ENCODE measurements at regions of chr6 and their contacts with region 1.

Region 1: GRCh38 chr6:39302669-39303424 is 11.4 kb downstream of the KCNK17 start:
- DNase-seq: peak; percentile 83 to 92 (median 86)
- H3K4me3 ChIP-seq: peak overlapping the region in 2 of 3 donors; percentile 13 to 20
- H3K27ac ChIP-seq: no peak overlapping the region
- H3K4me1 ChIP-seq: peaks cover 0 to 6% (median 0%) of the 10 kb centered on the region in 3 donors
- H3K27me3 ChIP-seq: no peaks in the 10 kb centered on the region
- CTCF ChIP-seq: peak; percentile 97

Region 2: DNA sequence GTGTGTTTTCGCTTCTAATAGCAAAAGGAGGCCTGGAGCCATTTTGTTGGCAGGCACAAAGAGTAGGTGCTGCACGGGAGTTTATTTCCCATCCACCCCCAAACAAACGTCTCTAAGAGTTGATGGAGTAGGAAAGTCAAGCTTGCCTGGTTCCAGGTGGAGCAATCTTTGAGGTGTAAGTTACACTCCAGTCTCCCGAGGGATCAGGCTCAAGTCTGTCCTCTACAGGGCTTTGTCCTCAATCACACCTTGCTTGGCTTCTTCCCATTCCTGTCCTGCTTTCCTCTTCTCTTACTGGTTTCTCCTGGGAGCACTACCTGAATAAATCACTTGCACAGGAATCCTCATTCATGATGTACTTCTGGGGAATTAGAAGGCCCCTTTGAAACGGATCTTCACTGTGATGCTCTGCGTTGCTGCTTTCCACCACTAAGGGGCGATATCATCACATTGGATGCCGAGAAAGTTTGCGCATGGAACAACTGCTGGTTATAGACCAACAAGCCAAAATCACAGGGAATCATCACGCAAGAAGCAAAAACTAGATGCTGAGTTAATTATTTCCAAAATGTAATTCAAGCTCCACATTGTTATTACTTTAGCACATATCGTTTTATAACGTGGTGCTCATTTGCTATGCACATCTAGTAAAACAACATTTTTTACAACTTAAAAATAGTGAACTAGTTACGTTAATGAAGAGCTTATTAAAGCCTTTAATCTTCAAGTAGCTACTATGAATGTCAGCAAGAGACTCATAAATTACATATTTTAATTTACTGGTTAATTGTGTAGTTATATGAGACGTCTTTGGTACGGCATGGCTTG is 430.9 kb before region 1 on chr6:
- intact Hi-C with region 1: loop called (anchors 10 kb)
- DNase-seq: peak in 4 of 5 donors; percentile 60 to 83 (median 74)
- H3K4me3 ChIP-seq: no peak overlapping the region
- H3K27ac ChIP-seq: no peak overlapping the region
- H3K4me1 ChIP-seq: no peaks in the 10 kb centered on the region
- H3K27me3 ChIP-seq: no peaks in the 10 kb centered on the region
- CTCF ChIP-seq: peak; percentile 85

Region 3: DNA sequence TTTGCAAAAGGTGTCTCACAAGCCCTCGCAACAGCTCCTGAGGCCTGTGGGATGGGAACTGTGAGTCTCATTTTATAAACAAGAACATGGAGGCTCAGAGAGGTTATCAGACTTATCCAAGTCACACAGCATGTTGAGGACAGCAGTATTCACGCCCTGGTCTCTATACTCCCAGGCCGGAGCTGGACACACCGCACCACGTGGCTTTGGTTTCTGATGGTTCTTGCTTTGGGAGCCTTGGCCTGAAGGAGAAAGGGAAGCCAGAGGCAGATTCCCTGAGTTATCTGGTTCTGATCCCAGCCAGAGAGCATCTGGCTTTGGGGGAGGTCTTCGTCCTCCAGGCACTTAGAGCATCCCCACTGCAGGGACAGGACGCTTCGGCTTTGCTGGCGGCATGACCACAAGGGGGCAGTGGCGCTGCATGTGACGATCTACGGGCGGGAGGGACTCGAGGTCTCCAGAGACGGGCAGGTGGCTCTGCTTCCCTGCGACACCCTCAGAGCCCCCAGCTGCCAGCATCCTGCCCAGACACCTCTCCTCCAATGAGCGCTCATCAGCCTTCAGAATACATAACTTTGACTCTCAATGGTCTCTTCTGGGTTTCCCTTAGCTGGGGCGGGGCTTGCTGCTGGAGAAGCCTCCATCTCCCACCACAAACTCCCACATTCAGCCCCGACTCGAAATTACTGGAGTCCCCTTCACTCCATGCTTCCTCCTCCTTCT is 136.5 kb before region 1 on chr6:
- intact Hi-C with region 1: loop called (anchors 5 kb)
- DNase-seq: peak; percentile 83 to 91 (median 88)
- H3K4me3 ChIP-seq: no peak overlapping the region
- H3K27ac ChIP-seq: no peak overlapping the region
- H3K4me1 ChIP-seq: peaks cover 0 to 21% (median 5%) of the 10 kb centered on the region in 3 donors
- H3K27me3 ChIP-seq: no peaks in the 10 kb centered on the region
- CTCF ChIP-seq: peak; percentile 91

Region 4: DNA sequence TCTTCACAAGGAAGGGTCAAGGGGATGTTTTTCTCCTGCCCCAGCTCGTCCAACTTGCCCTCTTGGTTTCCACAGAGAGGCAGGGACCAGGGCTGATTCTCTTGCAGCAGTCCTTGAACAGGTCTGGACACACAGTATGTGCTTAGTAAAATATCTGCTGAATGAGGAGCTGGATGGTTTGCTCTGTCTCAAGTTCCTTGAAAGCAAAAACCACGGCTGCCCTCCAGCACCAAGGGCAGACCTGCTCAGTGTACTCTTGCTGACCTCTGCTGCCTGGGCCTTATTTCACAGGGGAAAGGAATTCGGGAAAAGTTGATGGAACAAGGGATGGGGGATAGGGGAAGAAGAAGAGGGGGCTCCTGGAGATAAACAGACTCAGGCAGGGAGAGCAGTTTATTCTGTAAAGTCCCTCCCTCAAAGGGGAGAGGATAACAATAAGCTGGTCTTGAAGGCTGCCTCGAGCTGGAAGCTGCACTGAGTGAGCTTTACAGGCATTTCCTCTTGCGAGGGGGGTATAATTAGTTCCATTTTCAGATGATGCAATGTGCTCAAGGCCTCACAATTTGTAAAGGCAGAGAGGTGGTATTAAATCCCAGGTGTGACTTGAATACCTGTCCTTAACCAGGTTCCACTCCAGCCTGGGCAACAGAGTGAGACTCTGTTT is 83.8 kb before region 1 on chr6:
- intact Hi-C with region 1: no loop called
- DNase-seq: no peak
- H3K4me3 ChIP-seq: no peak overlapping the region
- H3K27ac ChIP-seq: peak overlapping the region in 1 of 2 donors; percentile 20
- H3K4me1 ChIP-seq: peaks cover 0 to 69% (median 49%) of the 10 kb centered on the region in 3 donors
- H3K27me3 ChIP-seq: no peaks in the 10 kb centered on the region
- CTCF ChIP-seq: no peak

Measured in kidney (tissue), 22 donors.